Common myeloid progenitor, CD34-positive (primary cell): ENCODE measurements at regions of chr15 and their contacts with region 1.

Region 1: GRCh38 chr15:73633111-73633990 is at the start of gene NPTN:
- DNase-seq: peak; percentile 97 to 98 (median 98)
- H3K4me3 ChIP-seq: peak within 1 kb of the TSS; percentile 68 to 86 (median 85)
- H3K27ac ChIP-seq: peak within 1 kb of the TSS; percentile 52 to 83
- H3K4me1 ChIP-seq: peaks cover 19 to 44% (median 28%) of the 10 kb centered on the region in 4 experiments
- H3K27me3 ChIP-seq: peaks cover 0 to 11% (median 0%) of the 10 kb centered on the region in 5 experiments

Region 2: DNA sequence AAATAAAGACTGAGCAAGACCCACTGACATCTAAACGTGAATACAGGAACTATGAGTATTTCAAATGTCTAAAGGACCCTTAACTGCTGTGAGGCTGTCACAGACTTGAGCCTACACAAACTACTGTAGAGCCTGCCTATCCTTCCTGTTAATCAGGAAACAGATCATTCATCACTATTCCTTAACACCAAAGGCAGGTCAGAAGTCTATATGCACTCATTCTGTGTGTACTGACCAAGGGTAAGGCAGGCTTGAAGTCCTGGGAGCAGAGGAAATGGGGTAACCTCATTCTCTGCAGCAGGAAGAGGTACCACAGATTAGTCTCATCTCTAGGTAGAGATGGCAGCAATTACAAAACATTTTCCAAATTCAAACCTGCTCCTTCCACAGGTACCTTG is 30.9 kb before region 1 on chr15:
- CTCF ChIA-PET with region 1: interaction called, 14 read pairs
- POLR2A ChIA-PET with region 1: no interaction called
- DNase-seq: peak in 2 of 3 donors; percentile 30 to 42
- H3K4me3 ChIP-seq: peak overlapping the region in 1 of 7 experiments; percentile 4
- H3K27ac ChIP-seq: no peak overlapping the region
- H3K4me1 ChIP-seq: peaks cover 6 to 45% (median 21%) of the 10 kb centered on the region in 4 experiments
- H3K27me3 ChIP-seq: no peaks in the 10 kb centered on the region

Region 3: GRCh38 chr15:73617301-73617831 is 16.0 kb before region 1 on chr15:
- CTCF ChIA-PET with region 1: interaction called, 12 read pairs
- POLR2A ChIA-PET with region 1: interaction called, 5 read pairs
- DNase-seq: no peak
- H3K4me3 ChIP-seq: no peak overlapping the region
- H3K27ac ChIP-seq: no peak overlapping the region
- H3K4me1 ChIP-seq: peaks cover 0 to 3% (median 0%) of the 10 kb centered on the region in 4 experiments
- H3K27me3 ChIP-seq: no peaks in the 10 kb centered on the region

Region 4: DNA sequence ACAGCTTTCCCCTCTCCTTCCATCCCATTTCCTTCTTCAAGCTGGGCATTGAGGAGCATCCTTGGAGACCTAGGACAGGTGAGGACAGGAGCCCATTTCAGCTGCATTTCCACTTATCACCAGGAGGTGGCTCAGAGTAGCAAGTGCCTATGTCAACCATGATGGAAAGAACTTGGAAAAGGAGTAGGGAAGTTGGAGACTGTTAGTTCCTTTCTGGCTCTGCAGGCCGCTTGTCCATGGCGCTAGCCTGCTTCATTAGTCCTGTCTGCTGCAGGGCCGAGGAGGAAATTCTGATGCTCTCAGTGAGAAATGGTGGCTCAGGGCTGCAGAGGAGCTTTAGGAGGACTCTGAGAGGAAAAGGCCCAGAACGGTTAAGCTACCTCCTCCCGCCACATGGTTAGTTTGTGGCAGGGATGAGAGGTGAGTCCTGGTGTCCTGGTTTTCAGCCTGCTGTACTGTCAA is 43.8 kb after region 1 on chr15:
- CTCF ChIA-PET with region 1: interaction called, 22 read pairs
- POLR2A ChIA-PET with region 1: no interaction called
- DNase-seq: peak; percentile 40 to 45 (median 42)
- H3K4me3 ChIP-seq: no peak overlapping the region
- H3K27ac ChIP-seq: no peak overlapping the region
- H3K4me1 ChIP-seq: peaks cover 0 to 29% (median 8%) of the 10 kb centered on the region in 4 experiments
- H3K27me3 ChIP-seq: peaks cover 0 to 6% (median 0%) of the 10 kb centered on the region in 5 experiments